ENCODE measurements at regions of chr13 and their contacts with region 1.

Region 1: GRCh38 chr13:51814825-51815650 is 11.1 kb upstream of the DHRS12 start:
- DNase-seq: no peak
- H3K4me3 ChIP-seq: no peak overlapping the region
- H3K27me3 ChIP-seq: peaks cover 20% of the 10 kb centered on the region
- CTCF ChIP-seq: peak; percentile 85

Region 2: DNA sequence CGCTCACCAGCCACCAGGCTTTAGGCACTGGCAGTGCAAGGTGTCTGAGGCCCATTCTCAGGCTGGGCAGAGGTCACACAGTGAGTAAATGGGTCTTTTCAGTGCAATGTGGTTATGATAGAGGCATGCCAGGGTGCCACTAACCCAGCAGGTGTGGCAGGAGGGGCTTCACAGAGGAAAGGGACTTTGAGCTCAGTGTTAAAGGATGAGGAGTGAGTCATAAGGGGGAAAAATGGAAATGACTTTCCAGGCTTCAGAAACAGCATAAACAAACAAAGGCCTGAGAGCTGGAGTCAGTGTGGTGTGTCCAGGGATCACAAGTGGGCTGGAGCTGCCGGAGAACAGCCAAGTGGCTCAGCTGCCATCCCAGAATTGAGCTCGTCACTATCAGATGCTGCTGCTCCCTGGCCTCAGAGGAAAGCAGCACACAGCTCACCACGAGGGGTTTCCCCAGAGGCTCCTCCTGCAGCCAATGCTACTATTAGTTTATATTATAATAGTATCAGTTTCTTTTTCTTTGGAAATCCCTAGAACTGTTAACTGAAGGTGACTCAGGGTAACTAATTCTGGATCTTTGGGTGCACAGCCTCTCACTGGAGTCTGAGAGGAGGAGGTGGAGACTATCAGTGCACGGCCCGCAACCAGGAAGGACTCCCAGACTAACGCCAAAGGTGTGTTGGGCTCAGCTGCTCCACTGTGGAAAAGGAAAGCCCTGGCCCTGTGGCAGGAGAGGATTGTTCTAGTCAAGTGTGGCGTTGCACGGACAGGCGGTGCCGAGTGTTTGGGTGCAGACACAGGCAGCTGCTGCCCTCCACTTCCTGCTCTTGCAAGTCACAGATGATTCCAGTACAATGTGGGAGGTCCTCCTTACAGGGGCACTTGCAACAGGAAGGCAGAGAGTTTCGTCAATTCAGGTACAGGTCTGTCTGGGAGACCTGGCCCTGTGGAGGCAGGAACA is 50.6 kb before region 1 on chr13:
- CTCF ChIA-PET with region 1: no interaction called
- POLR2A ChIA-PET with region 1: no interaction called
- DNase-seq: no peak
- H3K4me3 ChIP-seq: no peak overlapping the region
- H3K27me3 ChIP-seq: no peaks in the 10 kb centered on the region
- CTCF ChIP-seq: no peak

Region 3: GRCh38 chr13:51804295-51805172 is 10.5 kb before region 1 on chr13:
- CTCF ChIA-PET with region 1: interaction called, 13 read pairs
- POLR2A ChIA-PET with region 1: no interaction called
- DNase-seq: no peak
- H3K4me3 ChIP-seq: peak overlapping the region; percentile 84
- H3K27me3 ChIP-seq: peaks cover 2% of the 10 kb centered on the region
- CTCF ChIP-seq: no peak

Region 4: DNA sequence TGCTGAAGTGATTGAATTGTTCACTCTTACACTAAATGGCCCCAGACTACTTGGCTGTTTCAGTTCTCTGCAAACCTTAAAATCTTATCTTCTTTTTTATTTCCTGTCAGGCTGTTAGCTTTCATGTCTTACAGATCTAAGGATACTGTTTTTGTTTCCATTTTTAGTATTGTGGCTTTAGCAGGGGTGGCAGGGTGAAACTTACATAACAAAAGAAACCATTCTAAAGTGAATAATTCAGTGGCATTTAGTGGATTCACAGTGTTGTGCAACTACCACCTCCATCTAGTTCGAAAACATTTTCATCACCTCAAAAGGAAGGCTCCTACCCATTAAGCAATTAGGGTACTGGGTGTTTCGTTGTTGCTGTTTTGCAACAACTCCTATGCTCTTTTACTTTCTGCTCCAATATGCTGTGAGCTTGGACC is 10.1 kb after region 1 on chr13:
- CTCF ChIA-PET with region 1: interaction called, 40 read pairs
- POLR2A ChIA-PET with region 1: no interaction called
- DNase-seq: no peak
- H3K4me3 ChIP-seq: no peak overlapping the region
- H3K27me3 ChIP-seq: peaks cover 15% of the 10 kb centered on the region
- CTCF ChIP-seq: no peak

Region 5: DNA sequence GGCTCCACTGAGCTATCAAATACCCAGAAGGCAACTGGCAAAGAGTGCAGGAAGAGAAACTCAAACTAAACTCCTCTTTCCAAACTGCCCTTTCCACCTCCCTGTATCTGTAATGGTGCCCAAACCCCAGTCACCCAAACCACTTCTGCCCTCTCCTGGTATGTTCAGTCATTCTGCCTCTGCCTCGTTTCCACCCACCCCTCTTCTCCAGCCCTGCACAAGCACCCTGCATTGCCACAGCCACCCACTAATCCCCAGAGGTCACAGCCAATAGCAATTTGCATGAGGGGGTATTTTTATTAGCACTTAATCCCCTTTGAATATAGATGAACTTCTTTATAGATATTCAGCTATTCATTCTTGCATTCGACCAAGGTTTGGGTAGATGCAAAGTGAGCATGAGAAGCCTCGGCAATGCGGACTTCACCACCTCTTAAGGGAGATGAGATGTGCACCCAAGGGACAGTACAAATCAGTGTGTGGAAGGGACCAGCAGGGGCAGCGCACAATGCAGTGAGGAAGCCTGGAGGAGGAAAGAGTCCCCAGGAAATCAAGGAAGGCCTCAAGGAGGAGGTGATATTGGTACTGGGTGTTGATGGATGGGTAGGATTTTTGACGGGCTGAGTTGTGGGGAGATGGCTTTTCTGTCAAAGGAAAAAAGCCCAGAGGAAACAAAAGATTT is 17.6 kb after region 1 on chr13:
- CTCF ChIA-PET with region 1: interaction called, 40 read pairs
- POLR2A ChIA-PET with region 1: no interaction called
- DNase-seq: no peak
- H3K4me3 ChIP-seq: no peak overlapping the region
- H3K27me3 ChIP-seq: peaks cover 21% of the 10 kb centered on the region
- CTCF ChIP-seq: peak; percentile 31

Region 6: DNA sequence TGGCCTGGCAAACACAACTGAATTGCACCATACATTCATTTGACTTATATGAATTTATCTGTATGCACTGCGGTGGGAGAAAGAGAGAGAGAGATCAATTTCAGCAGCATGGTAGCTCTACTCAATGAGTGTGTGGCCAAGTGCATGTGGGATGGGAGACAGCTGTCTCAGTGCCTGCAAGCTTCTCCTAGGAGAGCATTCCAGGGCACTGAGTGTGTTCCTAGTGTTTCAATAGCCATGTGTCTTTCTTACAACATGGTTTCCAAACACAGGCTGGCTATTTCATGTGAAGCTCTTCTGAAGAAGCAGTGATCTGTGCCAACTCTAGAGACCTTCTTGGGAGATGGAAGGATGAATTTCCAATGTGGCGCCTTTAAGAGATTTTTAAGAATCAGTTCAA is 270.4 kb after region 1 on chr13:
- CTCF ChIA-PET with region 1: no interaction called
- POLR2A ChIA-PET with region 1: no interaction called
- DNase-seq: peak; percentile 4
- H3K4me3 ChIP-seq: no peak overlapping the region
- H3K27me3 ChIP-seq: no peaks in the 10 kb centered on the region; the same call in 1 of the 2 replicates
- CTCF ChIP-seq: no peak